CD14-positive monocyte (primary cell): ENCODE measurements at regions of chr10 and their contacts with region 1.

Region 1: GRCh38 chr10:48623607-48624132 is 18.8 kb upstream of the ARHGAP22 start:
- DNase-seq: peak; percentile 79 to 91 (median 91)
- H3K4me3 ChIP-seq: peak overlapping the region in 1 of 3 experiments; percentile 34
- H3K4me3 Mint-ChIP-seq: peak overlapping the region; percentile 1 to 71
- H3K27ac ChIP-seq: peak overlapping the region; percentile 82 to 84
- H3K27ac Mint-ChIP-seq: peak overlapping the region; percentile 84 to 95 (median 90)
- H3K4me1 ChIP-seq: peaks cover 26 to 34% of the 10 kb centered on the region in 2 donors
- H3K4me1 Mint-ChIP-seq: peaks cover 32% of the 10 kb centered on the region
- H3K27me3 ChIP-seq: no peaks in the 10 kb centered on the region
- H3K27me3 Mint-ChIP-seq: peaks cover 3 to 7% (median 5%) of the 10 kb centered on the region in 3 donors
- CTCF ChIP-seq: no peak

Region 2: GRCh38 chr10:48577158-48577557 is 46.5 kb before region 1 on chr10:
- intact Hi-C with region 1: loop called in 1 of 2 experiments (anchors 5 kb)
- DNase-seq: peak; percentile 81 to 92 (median 88)
- H3K4me3 ChIP-seq: no peak overlapping the region
- H3K4me3 Mint-ChIP-seq: peak overlapping the region in 1 of 2 donors; percentile 11
- H3K27ac ChIP-seq: peak overlapping the region; percentile 62 to 77
- H3K27ac Mint-ChIP-seq: peak overlapping the region; percentile 87 to 93 (median 92)
- H3K4me1 ChIP-seq: peaks cover 56 to 74% of the 10 kb centered on the region in 2 donors
- H3K4me1 Mint-ChIP-seq: peaks cover 68% of the 10 kb centered on the region
- H3K27me3 ChIP-seq: no peaks in the 10 kb centered on the region
- H3K27me3 Mint-ChIP-seq: peaks cover 0 to 2% (median 1%) of the 10 kb centered on the region in 3 donors
- CTCF ChIP-seq: no peak

Region 3: DNA sequence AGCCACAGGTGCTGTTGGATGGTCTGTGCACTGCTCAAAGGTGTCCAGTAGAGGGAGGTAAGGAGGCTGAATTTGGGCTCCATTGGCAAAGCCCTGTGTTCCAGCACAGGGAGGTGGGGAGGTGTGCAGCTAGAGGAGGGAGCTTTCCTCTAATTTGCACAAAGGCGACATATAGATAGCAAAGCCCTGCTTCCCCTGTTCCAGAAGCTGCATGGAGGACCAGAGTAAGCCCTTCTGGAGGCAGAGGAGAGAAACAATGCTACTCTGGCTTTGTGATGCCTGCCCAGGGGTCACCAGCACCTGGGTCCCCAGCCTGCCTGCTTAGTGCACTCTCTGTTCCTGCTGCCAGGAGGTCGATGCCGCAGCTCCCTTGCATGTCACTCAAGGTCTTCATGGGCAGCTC is 15.4 kb before region 1 on chr10:
- intact Hi-C with region 1: loop called in 1 of 2 experiments (anchors 2 kb)
- DNase-seq: peak in 2 of 3 donors; percentile 48 to 49
- H3K4me3 ChIP-seq: no peak overlapping the region
- H3K4me3 Mint-ChIP-seq: peak overlapping the region in 1 of 2 donors; percentile 12
- H3K27ac ChIP-seq: peak overlapping the region in 1 of 2 donors; percentile 95
- H3K27ac Mint-ChIP-seq: peak overlapping the region in 3 of 7 donors; percentile 95 to 96 (median 96)
- H3K4me1 ChIP-seq: peaks cover 60 to 68% of the 10 kb centered on the region in 2 donors
- H3K4me1 Mint-ChIP-seq: peaks cover 63% of the 10 kb centered on the region
- H3K27me3 ChIP-seq: peaks cover 0 to 3% of the 10 kb centered on the region in 2 donors
- H3K27me3 Mint-ChIP-seq: peaks cover 4 to 17% (median 5%) of the 10 kb centered on the region in 3 donors
- CTCF ChIP-seq: peak; percentile 71

Region 4: GRCh38 chr10:48639632-48640031 is 16.0 kb after region 1 on chr10:
- intact Hi-C with region 1: loop called in 1 of 2 experiments (anchors 2 kb)
- DNase-seq: peak in 2 of 3 donors; percentile 70 to 74
- H3K4me3 ChIP-seq: peak overlapping the region in 2 of 3 experiments; percentile 20 to 44
- H3K4me3 Mint-ChIP-seq: peak overlapping the region in 1 of 2 donors; percentile 67
- H3K27ac ChIP-seq: peak overlapping the region in 1 of 2 donors; percentile 62
- H3K27ac Mint-ChIP-seq: peak overlapping the region; percentile 68 to 93 (median 82)
- H3K4me1 ChIP-seq: peaks cover 54 to 57% of the 10 kb centered on the region in 2 donors
- H3K4me1 Mint-ChIP-seq: peaks cover 56% of the 10 kb centered on the region
- H3K27me3 ChIP-seq: no peaks in the 10 kb centered on the region
- H3K27me3 Mint-ChIP-seq: peaks cover 19 to 23% (median 20%) of the 10 kb centered on the region in 3 donors
- CTCF ChIP-seq: no peak

Region 5: DNA sequence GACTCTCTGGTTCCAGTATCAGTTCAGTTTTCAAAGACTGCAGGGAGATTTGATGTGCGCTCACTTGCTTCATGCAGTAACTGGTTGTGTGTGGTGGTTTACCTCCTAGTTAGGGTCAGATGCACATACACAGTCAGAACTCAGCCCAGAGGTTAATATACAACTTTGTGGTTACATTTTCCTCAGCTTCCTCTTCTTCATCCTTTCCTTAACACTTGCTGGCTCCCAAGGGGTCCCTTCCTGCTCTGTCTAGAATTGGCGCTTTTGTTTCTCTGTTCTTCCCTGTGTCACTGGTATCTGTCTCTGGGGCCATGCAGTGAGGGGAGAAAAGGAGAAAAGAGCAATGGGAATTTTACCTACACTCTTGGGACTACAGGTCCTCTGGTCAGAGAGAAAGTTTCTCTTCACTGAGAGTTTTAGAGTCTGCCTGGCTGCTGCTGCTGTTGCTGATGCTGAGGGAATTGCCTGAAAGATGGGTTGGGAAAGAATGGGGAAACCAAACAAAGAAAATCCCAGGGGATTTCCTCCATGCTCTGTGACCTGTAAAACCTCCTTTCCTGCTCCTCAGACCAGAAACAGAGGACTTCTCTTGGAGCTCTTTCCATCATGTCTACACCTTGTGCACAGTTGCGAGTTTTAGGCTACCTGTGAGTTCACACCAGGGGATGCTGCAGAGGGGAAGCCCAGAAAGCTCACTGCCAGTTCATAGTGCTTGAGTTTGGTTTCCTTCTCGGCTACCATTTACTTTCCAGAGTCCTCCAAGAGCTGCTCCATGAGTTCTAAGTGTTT is 135.6 kb after region 1 on chr10:
- intact Hi-C with region 1: no loop called
- DNase-seq: peak in 2 of 3 donors; percentile 13 to 65
- H3K4me3 ChIP-seq: no peak overlapping the region
- H3K4me3 Mint-ChIP-seq: no peak overlapping the region
- H3K27ac ChIP-seq: peak overlapping the region in 1 of 2 donors; percentile 7
- H3K27ac Mint-ChIP-seq: peak overlapping the region in 5 of 7 donors; percentile 19 to 63 (median 30)
- H3K4me1 ChIP-seq: peaks cover 12 to 22% of the 10 kb centered on the region in 2 donors
- H3K4me1 Mint-ChIP-seq: peaks cover 24% of the 10 kb centered on the region
- H3K27me3 ChIP-seq: no peaks in the 10 kb centered on the region
- H3K27me3 Mint-ChIP-seq: no peaks in the 10 kb centered on the region
- CTCF ChIP-seq: no peak